Transverse colon (tissue), 4 donors: ENCODE measurements at regions of chr2 and their contacts with region 1.

Region 1: GRCh38 chr2:8681786-8682692 is at the start of gene ID2:
- DNase-seq: peak; percentile 99
- H3K4me3 ChIP-seq: peak within 1 kb of the TSS; percentile 53 to 88 (median 74)
- H3K27ac ChIP-seq: peak within 1 kb of the TSS; percentile 93 to 100 (median 96)
- H3K4me1 ChIP-seq: peaks cover 13 to 45% (median 37%) of the 10 kb centered on the region in 4 donors
- H3K27me3 ChIP-seq: no peaks in the 10 kb centered on the region
- CTCF ChIP-seq: no peak
- EP300 ChIP-seq: no peak
- POLR2A ChIP-seq: peak; percentile 100
- total RNA-seq, gene ID2: 329 to 437 (median 382) TPM

Region 2: DNA sequence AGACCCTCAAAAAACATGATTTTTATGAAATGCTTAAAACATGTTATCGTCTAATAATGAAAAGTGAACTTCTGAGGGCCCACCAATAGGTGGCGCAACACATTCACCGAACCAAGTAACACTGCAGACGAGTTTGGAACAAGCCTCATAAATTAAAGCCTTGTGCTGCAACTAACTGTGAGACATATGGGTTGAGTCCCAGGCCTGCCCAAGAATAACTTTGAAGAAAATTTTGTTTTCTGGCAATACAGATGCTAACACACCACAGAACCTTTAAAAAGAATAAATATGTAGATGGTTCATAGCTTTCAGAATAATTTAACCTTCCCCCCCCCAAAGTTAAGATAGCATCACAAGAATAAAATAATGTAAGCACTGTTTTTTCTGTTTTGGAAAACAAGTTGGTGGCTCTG is 1479.0 kb before region 1 on chr2:
- in situ Hi-C with region 1: no loop called
- intact Hi-C with region 1: loop called (anchors 10 kb)
- DNase-seq: peak; percentile 24
- H3K4me3 ChIP-seq: no peak overlapping the region
- H3K27ac ChIP-seq: no peak overlapping the region
- H3K4me1 ChIP-seq: no peaks in the 10 kb centered on the region
- H3K27me3 ChIP-seq: no peaks in the 10 kb centered on the region
- CTCF ChIP-seq: peak; percentile 65 to 86 (median 70)
- EP300 ChIP-seq: no peak
- POLR2A ChIP-seq: no peak

Region 3: GRCh38 chr2:7427293-7428060 is 1254.6 kb before region 1 on chr2:
- in situ Hi-C with region 1: loop called (anchors 5 to 10 kb)
- intact Hi-C with region 1: loop called (anchors 1 kb)
- DNase-seq: no peak
- H3K4me3 ChIP-seq: no peak overlapping the region
- H3K27ac ChIP-seq: no peak overlapping the region
- H3K4me1 ChIP-seq: peaks cover 0 to 12% (median 0%) of the 10 kb centered on the region in 4 donors
- H3K27me3 ChIP-seq: peaks cover 27% of the 10 kb centered on the region
- CTCF ChIP-seq: peak; percentile 63 to 82 (median 72)
- EP300 ChIP-seq: no peak
- POLR2A ChIP-seq: no peak

Region 4: GRCh38 chr2:8152392-8153257 is 529.4 kb before region 1 on chr2:
- in situ Hi-C with region 1: no loop called
- intact Hi-C with region 1: loop called (anchors 5 kb)
- DNase-seq: no peak
- H3K4me3 ChIP-seq: no peak overlapping the region
- H3K27ac ChIP-seq: no peak overlapping the region
- H3K4me1 ChIP-seq: peaks cover 0 to 6% (median 3%) of the 10 kb centered on the region in 4 donors
- H3K27me3 ChIP-seq: no peaks in the 10 kb centered on the region
- CTCF ChIP-seq: no peak
- EP300 ChIP-seq: no peak
- POLR2A ChIP-seq: no peak

Region 5: GRCh38 chr2:8574144-8575037 is 107.6 kb before region 1 on chr2:
- in situ Hi-C with region 1: no loop called
- intact Hi-C with region 1: no loop called
- DNase-seq: no peak
- H3K4me3 ChIP-seq: no peak overlapping the region
- H3K27ac ChIP-seq: peak overlapping the region in 1 of 4 donors; percentile 72
- H3K4me1 ChIP-seq: peaks cover 0 to 26% (median 11%) of the 10 kb centered on the region in 4 donors
- H3K27me3 ChIP-seq: no peaks in the 10 kb centered on the region
- CTCF ChIP-seq: no peak
- EP300 ChIP-seq: no peak
- POLR2A ChIP-seq: no peak